Right cardiac atrium (tissue), 5 donors: ENCODE measurements at regions of chr6 and their contacts with region 1.

Region 1: DNA sequence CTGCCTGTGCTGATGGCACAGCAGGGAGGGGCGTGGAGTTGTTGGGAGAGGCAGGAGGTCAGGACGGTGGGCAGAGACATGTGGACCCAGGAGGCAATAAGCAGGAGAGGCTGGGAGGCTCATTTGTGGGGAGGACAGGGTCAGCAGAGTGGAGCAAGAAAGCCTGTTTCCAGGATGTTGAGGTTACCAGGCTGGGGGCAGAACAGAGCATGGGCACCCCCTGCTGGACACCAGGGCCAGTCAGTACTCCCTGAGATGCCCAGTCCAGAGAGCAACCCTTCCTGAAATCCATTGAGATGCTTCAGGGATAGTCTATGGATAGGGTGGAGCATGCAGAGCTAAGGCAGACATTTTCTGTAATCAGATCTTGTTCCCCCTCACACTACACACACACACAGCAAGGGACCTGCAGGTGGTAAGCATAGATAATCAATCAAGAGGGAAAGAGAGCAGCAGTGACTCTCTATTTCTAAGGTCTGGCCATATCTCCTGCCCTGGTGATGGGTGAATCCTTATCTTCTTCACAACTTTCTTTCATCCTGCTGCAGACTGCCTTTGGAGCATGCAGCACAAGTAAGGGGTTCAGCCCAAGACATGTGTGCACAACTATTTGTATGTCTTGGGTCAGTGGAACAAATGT is 41.7 kb downstream of the MOCS1 start:
- DNase-seq: peak; percentile 74 to 87 (median 87)
- ATAC-seq: peak; percentile 72 to 76
- H3K4me3 ChIP-seq: no peak overlapping the region
- H3K27ac ChIP-seq: no peak overlapping the region
- H3K4me1 ChIP-seq: peaks cover 10% of the 10 kb centered on the region
- H3K27me3 ChIP-seq: no peaks in the 10 kb centered on the region

Region 2: DNA sequence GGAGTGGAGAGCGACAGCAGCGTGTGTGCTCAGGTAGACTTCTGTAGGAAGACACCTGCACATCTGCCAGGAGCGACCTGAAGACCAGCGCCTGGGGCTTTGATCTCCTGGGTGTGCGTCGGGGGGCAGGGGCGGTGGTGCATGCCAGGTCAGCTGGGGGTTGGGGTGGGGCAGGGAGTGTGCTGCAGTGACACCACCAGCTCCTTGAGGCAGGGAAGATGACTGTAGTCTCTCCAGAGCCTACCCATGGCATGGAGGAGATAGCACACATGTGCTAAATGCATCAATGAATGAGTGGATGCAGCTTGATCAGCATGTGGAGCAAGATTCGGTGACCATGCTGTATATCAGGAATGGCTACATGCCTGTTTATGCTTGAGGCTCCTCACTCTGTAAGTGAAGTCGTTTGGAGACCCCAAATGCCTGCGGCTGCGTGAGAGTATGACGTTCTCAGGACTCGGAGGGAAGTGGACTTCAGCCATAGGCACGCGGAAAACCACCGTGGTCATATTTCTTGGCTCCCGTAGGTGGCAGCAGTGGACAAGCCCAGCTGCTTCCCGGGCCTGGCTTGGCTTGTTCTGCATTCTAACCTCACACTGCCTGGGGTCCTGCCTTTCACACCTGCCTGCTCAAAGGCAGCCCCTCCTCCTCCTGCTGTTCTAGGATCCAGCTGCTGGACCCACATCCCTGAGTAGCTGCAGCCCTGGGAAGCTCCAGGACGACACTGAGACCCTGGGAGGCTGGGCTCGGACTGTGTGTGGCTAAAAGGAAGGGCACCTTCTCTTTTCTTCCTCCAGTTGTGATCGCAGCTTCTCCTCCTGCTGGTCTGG is 530.7 kb before region 1 on chr6:
- intact Hi-C with region 1: loop called in 1 of 4 experiments (anchors 10 kb)
- DNase-seq: peak; percentile 61 to 79 (median 78)
- ATAC-seq: peak; percentile 80 to 81
- H3K4me3 ChIP-seq: no peak overlapping the region
- H3K27ac ChIP-seq: no peak overlapping the region
- H3K4me1 ChIP-seq: no peaks in the 10 kb centered on the region
- H3K27me3 ChIP-seq: no peaks in the 10 kb centered on the region

Region 3: GRCh38 chr6:39377539-39377950 is 515.1 kb before region 1 on chr6:
- intact Hi-C with region 1: loop called in 3 of 4 experiments (anchors 2 to 5 kb)
- DNase-seq: peak; percentile 58 to 72 (median 68)
- ATAC-seq: peak; percentile 87 to 93
- H3K4me3 ChIP-seq: no peak overlapping the region
- H3K27ac ChIP-seq: no peak overlapping the region
- H3K4me1 ChIP-seq: no peaks in the 10 kb centered on the region
- H3K27me3 ChIP-seq: no peaks in the 10 kb centered on the region

Region 4: DNA sequence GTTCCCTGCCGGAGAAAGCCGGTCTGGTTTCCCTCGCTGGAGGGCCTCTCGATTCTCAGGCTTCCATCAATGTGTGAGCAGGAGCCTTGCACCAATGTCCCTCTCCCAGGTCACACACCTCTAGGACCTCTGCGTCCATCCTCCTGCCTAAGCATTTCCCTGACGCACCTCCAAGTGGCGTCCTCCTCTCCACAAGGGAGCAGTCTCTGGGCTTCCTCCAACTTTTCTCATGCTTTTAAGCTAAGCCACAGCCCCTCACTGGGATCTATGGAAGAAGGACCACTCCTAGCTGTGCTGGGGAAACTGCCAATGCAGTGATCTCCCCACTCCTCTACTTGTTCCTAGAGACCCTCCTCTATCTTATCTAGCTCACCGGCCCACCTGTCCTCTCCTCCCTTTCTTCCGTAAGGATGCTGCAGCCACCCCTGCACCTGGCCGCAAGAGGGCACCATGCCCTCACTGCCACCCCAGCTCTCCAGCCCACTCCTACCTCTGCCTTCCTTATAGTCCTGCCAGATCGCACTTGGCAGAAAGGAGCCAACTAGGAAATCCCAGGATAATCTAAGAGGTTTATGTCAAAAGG is 435.9 kb after region 1 on chr6:
- intact Hi-C with region 1: no loop called
- DNase-seq: no peak
- ATAC-seq: peak in 1 of 2 donors; percentile 25
- H3K4me3 ChIP-seq: no peak overlapping the region
- H3K27ac ChIP-seq: no peak overlapping the region
- H3K4me1 ChIP-seq: no peaks in the 10 kb centered on the region
- H3K27me3 ChIP-seq: no peaks in the 10 kb centered on the region

Region 5: GRCh38 chr6:40356242-40356910 is 463.8 kb after region 1 on chr6:
- intact Hi-C with region 1: no loop called
- DNase-seq: no peak
- ATAC-seq: no peak
- H3K4me3 ChIP-seq: no peak overlapping the region
- H3K27ac ChIP-seq: no peak overlapping the region
- H3K4me1 ChIP-seq: no peaks in the 10 kb centered on the region
- H3K27me3 ChIP-seq: no peaks in the 10 kb centered on the region